Activated T-helper 1 cell treated with anti-CD3 and anti-CD28 coated beads, Interleukin-12 subunit alpha, Interleukin-12 subunit beta, Interleukin-2, Interleukin-4 antibody, amounts not matched to agents 30 ng/mL and 10 ng/mL and 1 ng/mL, durations not matched to agents 14 hours and 24 hours and 36 hours (primary cell): ENCODE measurements at regions of chr5 and their contacts with region 1.

Region 1: GRCh38 chr5:5421961-5422818 is at the start of gene ICE1:
- DNase-seq: peak; percentile 91
- H3K4me3 Mint-ChIP-seq: peak within 1 kb of the TSS; percentile 96
- H3K27ac Mint-ChIP-seq: peak within 1 kb of the TSS; percentile 98
- H3K4me1 Mint-ChIP-seq: peaks cover 18% of the 10 kb centered on the region
- H3K27me3 Mint-ChIP-seq: no peaks in the 10 kb centered on the region
- total RNA-seq, gene ICE1: 35.3 and 38.2 TPM in 2 replicates

Region 2: DNA sequence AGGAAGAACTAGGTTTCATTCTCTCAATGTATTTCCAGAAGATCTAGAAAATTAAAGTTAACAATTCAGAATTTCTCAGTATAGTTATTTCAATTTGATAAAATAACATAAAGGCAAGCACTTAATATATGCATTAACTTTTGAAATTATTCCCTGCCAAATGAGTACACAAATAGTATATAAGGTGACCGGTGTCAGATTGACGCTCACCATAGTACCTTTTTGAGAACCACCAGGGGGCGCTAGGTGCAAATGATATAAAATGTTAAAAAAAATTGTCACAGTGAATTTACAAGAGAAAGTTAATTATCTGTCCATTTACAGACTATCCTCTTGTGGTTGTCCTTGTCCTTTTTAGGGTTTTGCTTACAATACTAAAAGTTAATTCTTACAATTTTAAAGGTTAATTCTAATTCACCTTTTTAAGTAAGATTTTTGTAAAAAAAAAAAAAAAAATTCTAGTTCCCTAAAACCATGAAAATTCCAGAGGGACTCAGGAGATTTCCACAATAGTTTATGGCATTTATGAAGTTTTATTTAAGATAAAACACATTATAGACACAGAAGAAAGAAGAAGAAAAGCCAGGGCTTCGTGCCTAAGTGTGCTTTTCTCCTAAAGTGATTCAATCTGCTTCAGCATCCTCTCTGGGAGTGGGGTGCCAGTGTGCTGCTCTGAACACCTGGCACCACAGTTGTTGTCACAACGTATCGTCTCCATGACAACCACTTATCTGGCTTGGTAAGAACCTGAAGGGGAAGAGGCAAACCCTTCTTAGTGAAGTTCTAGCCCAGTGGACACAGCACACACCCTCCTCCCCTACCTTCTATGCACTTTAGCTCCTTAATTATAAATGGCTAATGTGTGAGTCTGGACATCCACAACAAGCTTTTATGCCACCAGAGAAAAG is 280.3 kb before region 1 on chr5:
- intact Hi-C with region 1: loop called (anchors 1 kb)
- DNase-seq: peak; percentile 4
- H3K4me3 Mint-ChIP-seq: no peak overlapping the region
- H3K27ac Mint-ChIP-seq: no peak overlapping the region
- H3K4me1 Mint-ChIP-seq: peaks cover 5% of the 10 kb centered on the region
- H3K27me3 Mint-ChIP-seq: peaks cover 19% of the 10 kb centered on the region

Region 3: DNA sequence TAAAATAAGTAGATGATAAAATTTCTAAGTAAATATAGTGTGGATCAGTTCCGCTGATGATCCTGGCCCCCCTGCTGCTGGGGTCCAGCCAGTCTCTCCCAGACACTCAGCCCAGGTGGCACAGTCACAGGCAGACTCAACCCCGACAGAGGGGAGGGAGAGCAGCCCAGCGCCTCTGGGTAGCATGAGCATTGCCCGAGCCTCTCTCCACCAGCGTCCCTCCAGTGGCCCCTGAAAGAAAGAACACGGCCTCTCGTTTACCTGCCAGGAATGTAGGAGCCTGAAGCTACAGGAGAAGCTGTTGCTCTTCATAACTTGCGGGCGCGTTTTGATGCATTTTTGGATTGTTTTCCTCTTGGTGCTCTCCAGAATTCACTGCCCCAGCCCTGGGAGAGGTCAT is 68.5 kb before region 1 on chr5:
- intact Hi-C with region 1: no loop called
- DNase-seq: no peak
- H3K4me3 Mint-ChIP-seq: no peak overlapping the region
- H3K27ac Mint-ChIP-seq: no peak overlapping the region
- H3K4me1 Mint-ChIP-seq: no peaks in the 10 kb centered on the region
- H3K27me3 Mint-ChIP-seq: no peaks in the 10 kb centered on the region

Region 4: DNA sequence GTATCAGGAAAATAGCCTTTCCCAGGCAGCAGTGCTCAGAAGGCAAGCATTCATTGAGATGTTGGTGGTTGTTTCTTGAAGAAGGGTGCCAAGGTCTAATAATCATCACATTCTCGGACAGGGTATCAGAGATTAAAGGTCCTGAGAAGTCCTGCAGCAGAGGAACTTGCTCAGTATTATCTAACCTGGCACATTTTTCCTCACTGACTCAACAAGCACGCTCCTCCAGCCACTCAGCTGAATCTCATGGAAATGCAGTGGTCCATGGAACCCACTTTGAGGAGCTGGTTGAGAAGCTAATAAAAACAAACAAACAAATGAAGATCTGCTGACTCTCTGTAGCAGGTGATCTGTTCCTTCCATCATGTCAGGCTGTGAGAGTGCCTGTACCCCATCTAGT is 35.0 kb before region 1 on chr5:
- intact Hi-C with region 1: no loop called
- DNase-seq: no peak
- H3K4me3 Mint-ChIP-seq: no peak overlapping the region
- H3K27ac Mint-ChIP-seq: no peak overlapping the region
- H3K4me1 Mint-ChIP-seq: no peaks in the 10 kb centered on the region
- H3K27me3 Mint-ChIP-seq: no peaks in the 10 kb centered on the region

Region 5: DNA sequence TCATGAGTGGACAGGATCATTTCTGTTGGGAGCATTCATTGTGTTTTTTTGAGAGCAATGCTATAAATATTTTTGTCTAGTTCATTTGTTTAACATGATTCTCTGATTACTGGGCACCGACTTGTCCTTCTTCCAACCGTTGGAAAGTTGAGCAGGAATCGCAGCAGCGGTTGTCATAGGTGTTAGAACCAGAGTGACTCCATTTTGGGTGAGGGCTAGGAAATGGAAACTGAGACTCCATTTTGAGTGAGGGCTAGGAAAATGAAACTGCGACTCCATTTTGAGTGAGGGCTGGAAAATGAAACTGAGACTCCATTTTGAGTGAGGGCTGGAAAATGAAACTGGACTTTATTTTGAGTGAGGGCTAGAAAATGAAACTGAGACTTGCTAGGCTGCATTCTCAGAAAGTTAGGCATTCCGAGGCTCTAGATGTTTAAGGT is 100.9 kb after region 1 on chr5:
- intact Hi-C with region 1: loop called (anchors 1 kb)
- DNase-seq: peak; percentile 43
- H3K4me3 Mint-ChIP-seq: peak overlapping the region; percentile 22
- H3K27ac Mint-ChIP-seq: peak overlapping the region; percentile 61
- H3K4me1 Mint-ChIP-seq: peaks cover 32% of the 10 kb centered on the region
- H3K27me3 Mint-ChIP-seq: no peaks in the 10 kb centered on the region

Region 6: DNA sequence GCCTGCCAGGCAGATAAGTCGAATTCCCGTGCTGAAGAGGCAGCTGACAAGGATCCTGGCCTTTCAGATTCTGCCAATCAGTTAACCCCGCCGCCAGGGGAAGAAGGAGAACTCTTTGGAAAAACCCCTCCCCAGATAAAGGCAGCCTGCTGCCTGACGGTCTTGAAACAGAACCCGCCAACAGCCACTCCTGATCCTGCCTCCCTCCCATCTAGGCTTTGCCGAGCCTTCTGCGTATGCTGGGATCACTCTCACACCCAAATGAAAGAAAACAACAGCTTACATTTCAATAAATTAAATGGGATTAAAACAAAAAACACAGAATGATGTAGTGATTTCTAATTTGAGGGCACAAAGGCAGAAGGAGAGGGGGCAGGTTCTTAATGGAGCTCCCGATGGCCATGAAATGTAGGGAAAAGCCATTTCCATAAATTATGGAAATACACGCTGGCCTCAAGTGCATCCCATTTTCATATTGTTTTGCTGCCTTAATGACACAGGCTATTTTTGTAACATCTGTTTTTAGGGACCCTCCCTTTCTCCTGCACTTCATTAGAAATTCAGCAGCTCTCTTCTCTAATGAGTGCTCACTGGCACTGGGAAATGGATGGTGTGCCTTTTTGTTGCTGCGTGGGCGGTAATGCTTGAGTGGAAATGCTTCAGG is 637.1 kb after region 1 on chr5:
- intact Hi-C with region 1: no loop called
- DNase-seq: no peak
- H3K4me3 Mint-ChIP-seq: no peak overlapping the region
- H3K27ac Mint-ChIP-seq: no peak overlapping the region
- H3K4me1 Mint-ChIP-seq: no peaks in the 10 kb centered on the region
- H3K27me3 Mint-ChIP-seq: peaks cover 2% of the 10 kb centered on the region

Region 7: DNA sequence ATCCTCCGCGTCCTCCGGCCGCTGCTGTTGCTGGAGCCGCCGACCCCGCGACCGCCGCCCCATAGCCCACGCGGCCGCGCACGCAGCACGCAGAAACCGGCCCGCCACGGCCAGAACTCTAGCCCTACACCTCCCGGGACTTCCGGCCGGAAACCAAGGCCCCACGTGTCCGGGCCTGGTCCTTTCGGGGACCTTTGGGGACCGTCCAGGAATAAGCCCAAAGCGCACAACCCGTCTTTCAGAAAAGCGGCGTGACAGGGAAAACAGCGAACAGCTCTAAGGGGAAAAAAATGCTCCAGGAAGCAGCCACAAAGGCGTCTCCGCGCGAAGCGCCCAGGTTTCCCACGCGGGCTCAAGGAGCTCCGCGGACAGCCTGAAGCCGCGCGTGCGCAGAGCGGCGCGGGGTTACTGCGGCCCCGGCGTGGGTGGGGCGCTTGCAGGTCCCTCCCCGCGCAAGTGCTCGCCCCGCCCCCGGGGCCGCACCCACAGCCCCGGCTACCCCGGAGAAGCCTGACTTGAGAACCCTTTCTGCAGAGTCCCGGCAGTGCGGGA is 1210.8 kb after region 1 on chr5 and contains the starts of genes NSUN2 and SRD5A1:
- intact Hi-C with region 1: loop called (anchors 1 kb)
- DNase-seq: peak; percentile 90
- H3K4me3 Mint-ChIP-seq: peak within 1 kb of the TSS; percentile 98
- H3K27ac Mint-ChIP-seq: peak within 1 kb of the TSS; percentile 97
- H3K4me1 Mint-ChIP-seq: peaks cover 57% of the 10 kb centered on the region
- H3K27me3 Mint-ChIP-seq: no peaks in the 10 kb centered on the region
- total RNA-seq, gene NSUN2: 146 and 149 TPM in 2 replicates
- total RNA-seq, gene SRD5A1: 13.8 and 14.0 TPM in 2 replicates